Activated CD4-positive, alpha-beta T cell treated with anti-CD3 and anti-CD28 coated beads for 36 hours (primary cell): ENCODE measurements at regions of chr1 and their contacts with region 1.

Region 1: DNA sequence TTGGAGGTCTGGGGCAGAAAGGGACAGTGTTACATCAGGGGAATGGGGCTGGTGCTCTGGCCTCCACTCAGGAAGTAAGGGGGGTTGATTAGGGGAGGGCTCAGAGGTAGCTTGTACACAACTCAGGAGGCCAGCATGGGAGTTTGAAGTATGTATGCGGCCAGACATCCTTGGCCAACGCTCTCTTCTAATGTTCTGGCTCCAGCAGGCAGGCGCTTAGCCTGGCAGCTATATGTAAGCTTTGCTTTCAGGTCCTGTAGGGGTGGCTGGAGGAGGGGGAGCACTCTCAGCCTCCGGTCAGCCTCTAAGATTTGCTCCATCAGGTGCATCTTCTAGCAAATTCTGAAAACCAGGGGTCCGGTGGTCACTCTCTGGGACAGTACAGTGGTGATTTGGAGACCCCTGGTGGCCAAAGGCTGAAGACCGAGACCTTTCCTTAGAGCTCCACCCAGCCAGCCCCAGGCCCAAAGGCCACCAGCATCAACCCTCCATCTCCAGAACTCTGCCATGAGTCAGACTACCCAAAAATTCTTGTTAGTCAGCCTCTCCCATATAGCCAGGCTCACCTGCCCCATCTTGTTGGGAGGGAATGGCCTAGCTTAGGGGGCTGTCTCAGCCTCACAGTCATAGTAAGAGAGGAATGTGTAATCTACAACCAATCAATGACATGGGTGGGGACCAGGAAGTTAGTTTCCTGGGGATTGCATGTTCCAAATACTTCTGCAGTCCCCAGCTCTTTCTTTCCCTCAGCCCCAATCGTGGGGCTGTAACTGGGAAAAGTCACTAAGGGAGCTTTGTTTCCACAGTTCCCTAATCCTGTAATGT is 9.7 kb upstream of the COL8A2 start:
- DNase-seq: peak; percentile 71
- ATAC-seq: peak; percentile 73
- H3K4me3 Mint-ChIP-seq: no peak overlapping the region
- H3K27ac Mint-ChIP-seq: no peak overlapping the region
- H3K4me1 Mint-ChIP-seq: peaks cover 4% of the 10 kb centered on the region
- H3K27me3 Mint-ChIP-seq: no peaks in the 10 kb centered on the region

Region 2: GRCh38 chr1:35882945-35883634 is 251.6 kb before region 1 on chr1 and contains the start of gene AGO1:
- CTCF ChIA-PET with region 1: no interaction called
- POLR2A ChIA-PET with region 1: no interaction called
- intact Hi-C with region 1: loop called in 1 of 2 experiments (anchors 2 kb)
- DNase-seq: peak; percentile 98
- ATAC-seq: peak; percentile 95
- H3K4me3 Mint-ChIP-seq: peak within 1 kb of the TSS; percentile 91
- H3K27ac Mint-ChIP-seq: peak within 1 kb of the TSS; percentile 73
- H3K4me1 Mint-ChIP-seq: peaks cover 46% of the 10 kb centered on the region
- H3K27me3 Mint-ChIP-seq: no peaks in the 10 kb centered on the region
- total RNA-seq, gene AGO1: 31.5 to 34.6 TPM

Region 3: GRCh38 chr1:35915693-35916092 is 219.0 kb before region 1 on chr1:
- CTCF ChIA-PET with region 1: no interaction called
- POLR2A ChIA-PET with region 1: no interaction called
- intact Hi-C with region 1: no loop called
- DNase-seq: no peak
- ATAC-seq: no peak
- H3K4me3 Mint-ChIP-seq: no peak overlapping the region
- H3K27ac Mint-ChIP-seq: no peak overlapping the region
- H3K4me1 Mint-ChIP-seq: no peaks in the 10 kb centered on the region
- H3K27me3 Mint-ChIP-seq: no peaks in the 10 kb centered on the region

Region 4: DNA sequence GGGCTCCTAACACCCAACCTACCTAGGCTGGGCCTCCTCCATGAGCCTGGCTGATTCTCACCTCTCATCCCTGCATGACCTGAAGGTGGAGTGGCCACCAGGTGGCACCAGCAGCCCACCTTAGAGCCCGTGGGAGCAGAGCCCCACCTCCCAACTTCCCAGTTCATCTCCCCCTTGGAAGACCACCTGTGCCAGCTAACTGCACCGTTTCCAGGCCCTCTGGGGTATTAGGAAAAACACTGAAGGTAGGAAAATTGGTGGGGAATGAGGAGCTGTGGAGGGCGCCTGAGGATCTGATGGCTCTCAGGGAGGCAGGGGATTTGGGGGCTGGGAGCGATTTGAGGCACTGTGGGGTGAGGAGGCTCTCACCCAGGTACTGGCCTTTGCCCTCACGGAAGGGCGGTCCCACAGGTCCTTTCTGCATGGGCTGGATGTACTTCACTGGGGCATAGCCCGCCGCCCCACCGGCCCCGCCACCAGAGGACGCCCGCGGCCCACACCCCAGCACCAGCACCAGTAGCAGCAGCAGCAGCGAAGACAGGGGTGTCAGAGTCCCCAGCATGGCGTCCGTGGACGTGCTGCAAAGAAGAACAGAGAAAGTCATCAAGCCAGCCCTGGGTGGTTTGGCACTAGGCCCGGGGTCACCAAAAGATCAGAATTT is 34.9 kb before region 1 on chr1:
- CTCF ChIA-PET with region 1: interaction called, 28 read pairs
- POLR2A ChIA-PET with region 1: no interaction called
- intact Hi-C with region 1: loop called (anchors 1 kb)
- DNase-seq: peak; percentile 87
- ATAC-seq: peak; percentile 95
- H3K4me3 Mint-ChIP-seq: no peak overlapping the region
- H3K27ac Mint-ChIP-seq: peak overlapping the region; percentile 10
- H3K4me1 Mint-ChIP-seq: no peaks in the 10 kb centered on the region
- H3K27me3 Mint-ChIP-seq: no peaks in the 10 kb centered on the region

Region 5: DNA sequence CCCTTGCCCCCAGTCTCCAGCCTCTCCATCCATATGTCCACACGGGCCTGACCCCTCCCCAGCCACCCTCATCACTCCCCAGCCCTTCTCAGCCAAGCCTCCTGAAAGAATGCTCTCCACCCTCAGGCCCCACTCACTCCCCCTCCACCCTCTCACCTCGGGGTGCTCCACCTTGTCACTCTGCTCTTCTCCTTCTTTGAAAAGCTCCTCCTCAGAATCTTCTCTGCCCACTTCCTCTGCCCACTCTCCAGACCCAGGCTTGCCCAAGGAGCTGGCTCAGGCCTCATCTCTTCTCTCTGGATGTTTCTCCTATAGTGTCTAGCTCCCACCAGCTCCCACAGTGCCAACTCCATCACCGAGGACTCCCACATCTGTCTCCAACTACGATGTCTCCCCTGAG is 23.6 kb before region 1 on chr1:
- CTCF ChIA-PET with region 1: interaction called, 10 read pairs
- POLR2A ChIA-PET with region 1: no interaction called
- intact Hi-C with region 1: no loop called
- DNase-seq: no peak
- ATAC-seq: no peak
- H3K4me3 Mint-ChIP-seq: no peak overlapping the region
- H3K27ac Mint-ChIP-seq: no peak overlapping the region
- H3K4me1 Mint-ChIP-seq: peaks cover 17% of the 10 kb centered on the region
- H3K27me3 Mint-ChIP-seq: no peaks in the 10 kb centered on the region